Naive thymus-derived CD4-positive, alpha-beta T cell (primary cell): ENCODE measurements at regions of chr1 and their contacts with region 1.

Region 1: GRCh38 chr1:23800400-23801337 is at the start of gene GALE:
- DNase-seq: peak; percentile 87 to 96 (median 94)
- ATAC-seq: peak; percentile 97
- H3K4me3 ChIP-seq: peak within 1 kb of the TSS; percentile 84
- H3K4me3 Mint-ChIP-seq: peak within 1 kb of the TSS; percentile 79 to 94 (median 88)
- H3K27ac ChIP-seq: peak within 1 kb of the TSS; percentile 91
- H3K27ac Mint-ChIP-seq: peak within 1 kb of the TSS; percentile 81 to 95 (median 92)
- H3K4me1 ChIP-seq: peaks cover 7 to 15% of the 10 kb centered on the region in 2 donors
- H3K4me1 Mint-ChIP-seq: peaks cover 6 to 25% (median 15%) of the 10 kb centered on the region in 7 donors
- H3K27me3 ChIP-seq: no peaks in the 10 kb centered on the region
- H3K27me3 Mint-ChIP-seq: no peaks in the 10 kb centered on the region
- total RNA-seq, gene GALE: 8.1 to 21.4 (median 12.7) TPM

Region 2: DNA sequence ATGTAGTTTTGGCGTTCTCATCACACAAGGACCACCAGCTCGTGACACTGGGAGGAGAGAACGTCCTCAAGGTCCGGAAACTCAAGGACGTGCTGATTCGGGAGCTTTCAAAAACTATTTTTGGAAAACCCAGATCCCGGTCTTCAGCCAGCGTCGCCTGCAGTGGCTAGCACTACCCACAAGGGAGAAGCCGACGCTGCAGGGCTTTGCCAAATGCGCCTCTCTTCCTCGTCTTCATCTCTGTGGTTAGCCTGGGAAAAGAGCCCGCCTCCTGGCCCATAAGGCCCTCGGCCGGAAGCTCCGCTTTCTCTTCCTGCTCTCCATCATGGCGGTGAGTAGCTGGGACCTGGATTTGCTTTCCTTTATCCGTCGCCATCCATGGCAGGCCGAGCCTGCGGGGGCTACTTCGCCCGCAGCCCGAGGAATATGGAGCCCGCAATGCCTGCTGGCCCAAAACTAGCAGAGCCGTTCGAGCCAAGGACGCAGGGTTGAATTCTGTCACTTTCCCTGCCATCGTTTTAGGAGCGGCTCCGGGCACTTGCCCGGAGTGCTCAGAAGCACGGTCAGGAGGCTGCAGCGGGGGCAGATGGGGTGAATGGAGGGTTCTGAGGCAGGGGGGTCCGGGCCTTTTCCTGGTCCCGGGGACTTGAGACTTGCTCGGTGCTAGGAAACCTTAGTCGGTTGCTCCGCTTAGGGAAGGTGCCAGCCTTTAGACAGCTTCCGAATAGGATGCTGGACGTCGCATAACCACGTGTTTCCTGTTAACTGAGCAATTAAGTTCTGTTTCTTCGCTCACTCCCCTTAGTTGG is 109.0 kb before region 1 on chr1 and contains the start of gene RPL11:
- CTCF ChIA-PET with region 1: no interaction called
- POLR2A ChIA-PET with region 1: interaction called, 6 read pairs
- intact Hi-C with region 1: loop called in 1 of 2 experiments (anchors 1 kb)
- DNase-seq: peak; percentile 60 to 92 (median 88)
- ATAC-seq: peak; percentile 100
- H3K4me3 ChIP-seq: peak within 1 kb of the TSS; percentile 82
- H3K4me3 Mint-ChIP-seq: peak within 1 kb of the TSS; percentile 87 to 96 (median 94)
- H3K27ac ChIP-seq: peak within 1 kb of the TSS; percentile 88
- H3K27ac Mint-ChIP-seq: peak within 1 kb of the TSS; percentile 87 to 97 (median 93)
- H3K4me1 ChIP-seq: peaks cover 19 to 20% of the 10 kb centered on the region in 2 donors
- H3K4me1 Mint-ChIP-seq: peaks cover 33 to 50% (median 45%) of the 10 kb centered on the region in 7 donors
- H3K27me3 ChIP-seq: no peaks in the 10 kb centered on the region
- H3K27me3 Mint-ChIP-seq: no peaks in the 10 kb centered on the region
- total RNA-seq, gene RPL11: 1,206 to 2,420 (median 2,172) TPM

Region 3: GRCh38 chr1:23777979-23778814 is 22.5 kb before region 1 on chr1 and contains the start of gene PITHD1:
- CTCF ChIA-PET with region 1: no interaction called
- POLR2A ChIA-PET with region 1: interaction called, 53 read pairs
- intact Hi-C with region 1: loop called (anchors 1 kb)
- DNase-seq: peak; percentile 75 to 86 (median 83)
- ATAC-seq: peak; percentile 91
- H3K4me3 ChIP-seq: peak within 1 kb of the TSS; percentile 95
- H3K4me3 Mint-ChIP-seq: peak within 1 kb of the TSS; percentile 84 to 98 (median 94)
- H3K27ac ChIP-seq: peak within 1 kb of the TSS; percentile 97
- H3K27ac Mint-ChIP-seq: peak within 1 kb of the TSS; percentile 87 to 99 (median 96)
- H3K4me1 ChIP-seq: peaks cover 17 to 22% of the 10 kb centered on the region in 2 donors
- H3K4me1 Mint-ChIP-seq: peaks cover 17 to 65% (median 49%) of the 10 kb centered on the region in 7 donors
- H3K27me3 ChIP-seq: no peaks in the 10 kb centered on the region
- H3K27me3 Mint-ChIP-seq: no peaks in the 10 kb centered on the region
- total RNA-seq, gene PITHD1: 57.6 to 81.9 (median 76.0) TPM

Region 4: GRCh38 chr1:23838401-23838866 is 37.8 kb after region 1 on chr1:
- CTCF ChIA-PET with region 1: no interaction called
- POLR2A ChIA-PET with region 1: no interaction called
- intact Hi-C with region 1: loop called in 1 of 2 experiments (anchors 2 kb)
- DNase-seq: peak; percentile 61 to 81 (median 72)
- ATAC-seq: peak; percentile 100
- H3K4me3 ChIP-seq: peak overlapping the region; percentile 42
- H3K4me3 Mint-ChIP-seq: peak overlapping the region; percentile 73 to 90 (median 84)
- H3K27ac ChIP-seq: no peak overlapping the region
- H3K27ac Mint-ChIP-seq: peak overlapping the region in 4 of 9 donors; percentile 34 to 90 (median 53)
- H3K4me1 ChIP-seq: peaks cover 6% of the 10 kb centered on the region in 2 donors
- H3K4me1 Mint-ChIP-seq: peaks cover 0 to 14% (median 12%) of the 10 kb centered on the region in 7 donors
- H3K27me3 ChIP-seq: no peaks in the 10 kb centered on the region
- H3K27me3 Mint-ChIP-seq: peaks cover 0 to 32% (median 0%) of the 10 kb centered on the region in 5 donors

Region 5: GRCh38 chr1:23979878-23980724 is 179.4 kb after region 1 on chr1 and contains the start of gene SRSF10:
- CTCF ChIA-PET with region 1: no interaction called
- POLR2A ChIA-PET with region 1: interaction called, 3 read pairs
- intact Hi-C with region 1: loop called in 1 of 2 experiments (anchors 2 kb)
- DNase-seq: peak; percentile 91 to 99 (median 98)
- ATAC-seq: peak; percentile 97
- H3K4me3 ChIP-seq: peak within 1 kb of the TSS; percentile 75
- H3K4me3 Mint-ChIP-seq: peak within 1 kb of the TSS; percentile 87 to 98 (median 94)
- H3K27ac ChIP-seq: peak within 1 kb of the TSS; percentile 98
- H3K27ac Mint-ChIP-seq: peak within 1 kb of the TSS; percentile 94 to 99 (median 96)
- H3K4me1 ChIP-seq: peaks cover 31 to 43% of the 10 kb centered on the region in 2 donors
- H3K4me1 Mint-ChIP-seq: peaks cover 39 to 57% (median 53%) of the 10 kb centered on the region in 7 donors
- H3K27me3 ChIP-seq: no peaks in the 10 kb centered on the region
- H3K27me3 Mint-ChIP-seq: peaks cover 0 to 4% (median 0%) of the 10 kb centered on the region in 5 donors
- total RNA-seq, gene SRSF10: 170 to 252 (median 193) TPM